Heart right ventricle (tissue), 16 donors: ENCODE measurements at regions of chr20 and their contacts with region 1.

Region 1: GRCh38 chr20:44398303-44398702 is 42.8 kb downstream of the HNF4A start:
- DNase-seq: no peak
- ATAC-seq: no peak
- H3K4me3 ChIP-seq: no peak overlapping the region
- H3K27ac ChIP-seq: no peak overlapping the region
- H3K4me1 ChIP-seq: no peaks in the 10 kb centered on the region
- H3K27me3 ChIP-seq: peaks cover 0 to 22% (median 10%) of the 10 kb centered on the region in 7 donors
- CTCF ChIP-seq: no peak

Region 2: DNA sequence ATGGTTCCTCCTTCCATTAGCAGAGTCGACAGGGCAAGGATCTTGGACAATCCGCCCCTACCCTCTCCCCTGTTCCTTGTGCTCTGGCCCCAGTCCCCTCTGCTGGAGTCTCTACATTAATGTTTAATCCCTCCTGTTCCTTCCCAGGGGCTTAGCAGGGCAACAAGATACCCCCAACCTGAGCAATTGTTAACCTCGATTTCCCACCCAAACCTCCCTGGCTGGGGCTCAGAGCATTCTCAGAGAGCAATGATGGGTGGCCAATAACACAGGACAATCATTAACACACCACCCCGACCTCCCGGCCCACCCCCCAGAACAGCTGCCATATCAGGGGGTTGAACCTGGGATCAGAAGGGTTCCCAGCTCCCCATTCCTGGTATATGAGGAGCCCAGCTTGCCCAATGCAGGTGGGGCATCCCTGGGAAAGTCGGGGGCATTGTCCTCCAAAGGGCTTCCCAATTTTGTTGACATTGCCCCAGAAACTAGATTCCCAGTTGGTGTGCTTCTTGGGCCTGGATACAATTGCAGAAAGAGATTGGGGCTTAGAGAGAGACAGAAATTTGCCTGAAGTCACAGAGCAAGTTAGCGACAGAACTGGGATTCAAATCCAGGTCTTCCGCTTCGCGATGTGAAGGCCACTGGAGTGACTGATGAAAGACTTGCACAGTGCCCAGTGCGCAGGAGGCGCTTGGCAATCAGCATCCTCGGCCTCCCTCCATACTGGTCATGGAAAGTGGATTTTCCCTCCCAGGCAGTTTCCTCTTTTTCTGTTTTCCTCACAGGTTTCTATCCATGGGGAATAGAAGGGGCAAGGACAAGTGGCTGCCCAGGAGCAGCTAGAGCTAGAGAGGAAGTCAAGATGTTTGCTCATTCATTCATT is 17.8 kb after region 1 on chr20:
- intact Hi-C with region 1: loop called in 1 of 10 experiments (anchors 1 kb)
- DNase-seq: no peak
- ATAC-seq: no peak
- H3K4me3 ChIP-seq: no peak overlapping the region
- H3K27ac ChIP-seq: no peak overlapping the region
- H3K4me1 ChIP-seq: no peaks in the 10 kb centered on the region
- H3K27me3 ChIP-seq: peaks cover 0 to 45% (median 29%) of the 10 kb centered on the region in 7 donors
- CTCF ChIP-seq: no peak

Region 3: GRCh38 chr20:44460795-44461141 is 62.5 kb after region 1 on chr20:
- intact Hi-C with region 1: loop called in 4 of 10 experiments (anchors 5 kb)
- DNase-seq: no peak
- ATAC-seq: peak in 1 of 8 donors; percentile 42
- H3K4me3 ChIP-seq: no peak overlapping the region
- H3K27ac ChIP-seq: no peak overlapping the region
- H3K4me1 ChIP-seq: no peaks in the 10 kb centered on the region
- H3K27me3 ChIP-seq: no peaks in the 10 kb centered on the region
- CTCF ChIP-seq: peak in 8 of 9 donors; percentile 7 to 60 (median 42)

Region 4: DNA sequence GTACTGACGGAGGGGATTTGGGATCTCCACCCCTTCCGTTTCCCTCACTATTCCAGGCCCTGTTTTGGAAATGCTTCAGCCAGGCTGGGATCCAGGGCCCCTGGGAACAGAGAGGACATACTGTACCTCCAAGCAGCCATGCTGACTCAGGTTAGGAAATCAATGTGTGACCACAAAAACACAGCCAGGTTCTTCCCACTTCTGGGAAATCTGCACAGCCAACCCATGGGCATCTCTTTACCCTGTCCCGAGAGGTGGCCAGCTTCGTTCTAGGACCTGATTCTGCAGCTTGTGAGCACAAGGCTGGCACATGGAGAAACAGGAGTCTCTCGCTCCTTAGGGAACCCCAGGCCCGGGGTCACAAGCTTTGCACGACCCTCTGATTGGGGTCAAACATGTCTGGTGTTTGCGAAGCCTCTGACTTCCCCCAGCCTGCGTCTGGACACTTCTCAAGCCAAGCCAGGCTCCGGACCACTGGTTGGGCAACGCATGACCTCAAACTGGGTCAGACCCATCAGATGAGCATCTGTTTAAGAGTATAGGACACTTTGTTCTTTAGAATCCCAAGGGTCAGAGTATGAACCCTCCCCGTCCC is 69.1 kb after region 1 on chr20:
- intact Hi-C with region 1: loop called in 2 of 10 experiments (anchors 5 kb)
- DNase-seq: peak in 1 of 2 donors; percentile 46
- ATAC-seq: peak in 5 of 8 donors; percentile 23 to 88 (median 71)
- H3K4me3 ChIP-seq: no peak overlapping the region
- H3K27ac ChIP-seq: no peak overlapping the region
- H3K4me1 ChIP-seq: peaks cover 0 to 7% (median 0%) of the 10 kb centered on the region in 9 donors
- H3K27me3 ChIP-seq: no peaks in the 10 kb centered on the region
- CTCF ChIP-seq: no peak